GM12878 (cell line): ENCODE measurements at regions of chr5 and their contacts with region 1.

Region 1: GRCh38 chr5:142888469-142889085 is 118.4 kb downstream of the ARHGAP26 start:
- DNase-seq: no peak
- ATAC-seq: peak; percentile 70
- H3K4me3 ChIP-seq: no peak overlapping the region
- H3K27ac ChIP-seq: no peak overlapping the region
- H3K4me1 ChIP-seq: no peaks in the 10 kb centered on the region
- H3K27me3 ChIP-seq: no peaks in the 10 kb centered on the region
- CTCF ChIP-seq: peak; percentile 60 to 69 (median 69)
- EP300 ChIP-seq: no peak
- POLR2A ChIP-seq: no peak
- RAD21 ChIP-seq: peak; percentile 71

Region 2: DNA sequence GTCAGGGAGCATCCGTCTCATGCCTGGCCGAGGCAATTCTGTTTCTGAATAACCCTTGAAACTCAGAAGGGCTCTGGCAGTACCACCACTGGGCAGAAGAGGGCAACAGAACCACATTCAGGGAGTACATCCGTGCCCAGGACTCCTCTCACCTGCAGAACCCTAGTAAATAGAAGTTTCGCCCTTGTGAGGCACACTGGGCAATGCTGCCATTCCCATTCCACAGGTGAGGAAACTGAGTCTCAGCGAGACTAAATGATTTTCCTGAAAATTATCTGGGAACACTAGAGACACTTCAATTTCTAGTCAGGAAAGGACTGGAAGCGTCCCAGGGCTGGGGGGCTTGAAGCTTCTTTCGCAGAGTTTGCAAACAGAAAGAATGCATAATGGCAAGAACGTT is 277.4 kb before region 1 on chr5:
- CTCF ChIA-PET with region 1: interaction called, 4 read pairs
- POLR2A ChIA-PET with region 1: no interaction called
- RAD21 ChIA-PET with region 1: interaction called, 3 read pairs
- SMC1A ChIA-PET with region 1: no interaction called
- in situ Hi-C with region 1: no loop called
- intact Hi-C with region 1: loop called (anchors 5 kb)
- DNase-seq: no peak
- ATAC-seq: peak; percentile 97
- H3K4me3 ChIP-seq: no peak overlapping the region
- H3K27ac ChIP-seq: no peak overlapping the region
- H3K4me1 ChIP-seq: no peaks in the 10 kb centered on the region
- H3K27me3 ChIP-seq: no peaks in the 10 kb centered on the region; a peak in 4 of 4 replicates
- CTCF ChIP-seq: peak; percentile 68 to 94 (median 71)
- EP300 ChIP-seq: no peak
- POLR2A ChIP-seq: no peak
- RAD21 ChIP-seq: peak; percentile 78

Region 3: DNA sequence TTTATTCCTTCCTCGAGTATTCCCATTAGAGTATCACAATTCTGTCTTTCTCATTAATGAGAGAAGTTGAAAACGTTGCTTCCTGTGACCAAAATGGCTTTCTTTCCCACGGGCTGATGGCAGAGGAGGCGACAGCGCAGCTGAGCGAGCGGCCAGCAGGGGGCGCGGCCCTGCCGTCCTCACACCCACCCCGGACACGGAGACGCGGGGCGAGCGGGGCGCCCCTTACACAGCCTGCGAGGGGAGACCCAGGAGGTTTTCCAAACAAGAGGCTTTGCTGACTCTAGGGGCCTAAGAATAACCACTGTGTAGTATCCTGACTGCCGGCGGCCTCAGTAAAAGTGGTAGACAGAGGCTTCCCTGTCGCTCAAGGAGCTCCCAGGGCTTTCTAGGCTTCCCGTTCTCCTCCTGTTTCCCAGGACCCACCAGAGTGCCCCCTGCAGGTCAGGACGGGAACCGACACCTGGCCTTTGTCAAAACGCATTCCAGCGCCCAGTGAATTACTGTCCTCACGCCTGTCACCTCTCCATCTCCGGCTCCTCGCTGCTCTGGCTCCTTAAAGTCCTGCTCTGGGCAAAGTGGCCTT is 175.4 kb before region 1 on chr5:
- CTCF ChIA-PET with region 1: interaction called, 243 read pairs
- POLR2A ChIA-PET with region 1: no interaction called
- RAD21 ChIA-PET with region 1: interaction called, 21 read pairs
- SMC1A ChIA-PET with region 1: interaction called, 12 read pairs
- in situ Hi-C with region 1: no loop called
- intact Hi-C with region 1: loop called (anchors 1 kb)
- DNase-seq: peak; percentile 61
- ATAC-seq: peak; percentile 99
- H3K4me3 ChIP-seq: peak overlapping the region; percentile 53
- H3K27ac ChIP-seq: peak overlapping the region; percentile 50
- H3K4me1 ChIP-seq: no peaks in the 10 kb centered on the region
- H3K27me3 ChIP-seq: no peaks in the 10 kb centered on the region; a peak in 1 of 4 replicates
- CTCF ChIP-seq: peak; percentile 86 to 94 (median 91)
- EP300 ChIP-seq: no peak
- POLR2A ChIP-seq: no peak
- RAD21 ChIP-seq: peak; percentile 43

Region 4: GRCh38 chr5:142769741-142770631 is 118.6 kb before region 1 on chr5 and contains the start of gene ARHGAP26:
- CTCF ChIA-PET with region 1: interaction called, 16 read pairs
- POLR2A ChIA-PET with region 1: no interaction called
- RAD21 ChIA-PET with region 1: interaction called, 3 read pairs
- SMC1A ChIA-PET with region 1: no interaction called
- in situ Hi-C with region 1: no loop called
- intact Hi-C with region 1: no loop called
- DNase-seq: peak; percentile 70
- ATAC-seq: peak; percentile 99
- H3K4me3 ChIP-seq: peak within 1 kb of the TSS; percentile 85
- H3K27ac ChIP-seq: no peak within 1 kb of the TSS
- H3K4me1 ChIP-seq: peaks cover 5% of the 10 kb centered on the region; the same call in 1 of the 2 replicates
- H3K27me3 ChIP-seq: peaks cover 0 to 3% of the 10 kb centered on the region in 2 experiments; a peak in 3 of 4 replicates
- CTCF ChIP-seq: peak in 2 of 3 experiments; percentile 17 to 35; a peak in 2 of 6 replicates
- EP300 ChIP-seq: no peak
- POLR2A ChIP-seq: peak; percentile 91
- RAD21 ChIP-seq: no peak
- polyA plus RNA-seq, gene ARHGAP26: 9.4 to 9.8 TPM

Region 5: DNA sequence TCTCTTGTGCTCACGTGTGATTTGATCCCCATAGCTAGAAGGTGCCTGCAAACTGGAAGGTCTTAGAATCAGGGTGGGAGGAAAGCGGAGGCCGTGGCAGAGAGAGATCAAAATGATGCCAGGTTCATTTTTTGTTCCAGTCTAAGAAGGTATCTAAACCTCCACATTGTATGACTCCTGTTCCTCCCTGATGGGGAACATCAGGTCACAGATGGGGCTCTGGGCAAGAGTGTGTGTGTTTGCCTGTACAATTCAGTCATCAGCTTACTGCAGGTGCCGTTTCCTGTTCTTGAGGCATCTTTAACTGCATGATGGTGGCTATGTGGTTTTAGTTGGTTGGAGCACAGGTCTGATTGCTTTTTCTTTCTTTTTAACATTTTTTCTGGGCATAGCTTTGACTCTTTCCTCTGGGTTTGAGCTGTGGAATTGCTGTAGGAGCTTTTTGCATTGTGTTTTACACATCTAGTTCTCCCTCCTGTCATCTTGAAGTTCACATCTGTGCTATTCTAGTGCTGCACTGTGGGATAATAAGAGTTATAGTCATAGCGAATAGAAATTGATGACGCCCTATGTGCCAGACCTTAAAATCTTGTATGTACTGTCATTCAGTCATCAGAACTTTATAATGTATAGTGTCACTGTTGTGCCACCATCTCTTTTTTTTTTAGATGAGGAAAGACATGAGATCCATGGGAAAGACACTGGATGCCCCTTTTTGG is 87.6 kb before region 1 on chr5:
- CTCF ChIA-PET with region 1: no interaction called
- POLR2A ChIA-PET with region 1: no interaction called
- RAD21 ChIA-PET with region 1: no interaction called
- SMC1A ChIA-PET with region 1: no interaction called
- in situ Hi-C with region 1: no loop called
- intact Hi-C with region 1: no loop called
- DNase-seq: peak; percentile 48
- ATAC-seq: peak; percentile 90
- H3K4me3 ChIP-seq: 0 out of 2 replicates have a peak overlapping the region, but pooled peaks have one; percentile 24
- H3K27ac ChIP-seq: 0 out of 2 replicates have a peak overlapping the region, but pooled peaks have one; percentile 6
- H3K4me1 ChIP-seq: peaks cover 9% of the 10 kb centered on the region
- H3K27me3 ChIP-seq: no peaks in the 10 kb centered on the region
- CTCF ChIP-seq: no peak
- EP300 ChIP-seq: no peak
- POLR2A ChIP-seq: no peak
- RAD21 ChIP-seq: no peak

Region 6: DNA sequence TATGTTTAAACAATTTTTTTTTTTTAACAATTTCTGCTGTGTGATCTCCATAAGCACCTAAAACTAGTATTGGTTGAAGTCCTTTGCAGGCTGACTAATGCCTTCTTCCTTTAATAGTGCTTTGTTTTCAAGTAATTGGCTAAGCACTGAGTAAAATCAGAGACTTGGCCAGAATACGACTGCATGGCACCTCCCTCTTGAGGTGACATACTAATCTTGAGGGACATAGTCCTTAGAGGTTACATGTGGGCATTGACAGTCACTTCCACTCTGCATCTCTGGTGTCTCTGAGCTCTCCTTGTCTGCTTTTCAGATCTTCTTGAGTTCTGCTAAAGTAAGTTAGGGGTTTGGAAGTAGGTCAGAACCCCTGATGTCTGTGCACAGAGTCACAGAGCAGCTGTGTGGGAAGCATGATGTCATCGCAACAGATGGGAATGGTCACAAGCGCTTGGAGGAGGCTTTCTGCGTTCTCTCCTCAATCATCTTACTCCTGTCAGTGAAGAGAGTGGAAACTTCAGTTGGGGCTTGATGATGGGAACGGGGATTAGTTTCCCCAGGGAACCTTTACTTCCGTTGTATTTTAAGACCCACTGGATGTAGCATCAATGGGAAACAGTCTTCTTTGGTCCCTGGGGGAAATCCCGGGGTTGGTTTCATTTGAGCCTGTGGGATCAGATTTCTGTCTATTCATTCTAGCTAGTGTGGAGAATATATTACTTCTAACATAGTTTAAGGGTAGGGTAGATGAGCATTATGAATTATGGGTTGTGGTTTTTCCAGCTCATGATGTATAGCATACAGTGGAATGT is 18.5 kb after region 1 on chr5:
- CTCF ChIA-PET with region 1: interaction called, 11 read pairs
- POLR2A ChIA-PET with region 1: no interaction called
- RAD21 ChIA-PET with region 1: interaction called, 3 read pairs
- SMC1A ChIA-PET with region 1: interaction called, 3 read pairs
- in situ Hi-C with region 1: no loop called
- intact Hi-C with region 1: no loop called
- DNase-seq: no peak
- ATAC-seq: no peak
- H3K4me3 ChIP-seq: no peak overlapping the region
- H3K27ac ChIP-seq: no peak overlapping the region
- H3K4me1 ChIP-seq: no peaks in the 10 kb centered on the region
- H3K27me3 ChIP-seq: no peaks in the 10 kb centered on the region
- CTCF ChIP-seq: no peak
- EP300 ChIP-seq: no peak
- POLR2A ChIP-seq: no peak
- RAD21 ChIP-seq: no peak

Region 7: DNA sequence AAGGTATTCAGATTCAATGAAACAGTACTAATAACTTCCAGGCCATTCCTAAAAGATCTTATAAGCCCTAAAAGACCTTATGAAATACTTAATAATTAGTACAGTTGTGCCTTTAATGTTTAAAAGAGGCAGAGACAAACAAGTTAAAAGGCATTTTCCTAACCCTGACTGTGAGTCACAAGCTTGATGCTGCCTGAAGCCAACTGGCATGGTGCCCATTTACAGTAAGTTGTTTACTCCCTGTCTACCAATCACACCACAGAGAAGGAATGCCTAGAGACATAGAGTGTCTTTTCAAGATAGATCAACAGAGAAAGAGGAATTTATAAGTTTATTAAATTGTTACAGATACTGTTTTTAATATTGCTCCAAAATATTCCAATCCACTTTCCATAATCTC is 467.1 kb after region 1 on chr5:
- CTCF ChIA-PET with region 1: no interaction called
- POLR2A ChIA-PET with region 1: no interaction called
- RAD21 ChIA-PET with region 1: no interaction called
- SMC1A ChIA-PET with region 1: no interaction called
- in situ Hi-C with region 1: no loop called
- intact Hi-C with region 1: no loop called
- DNase-seq: no peak
- ATAC-seq: peak; percentile 25; the same call in 2 of the 3 replicates
- H3K4me3 ChIP-seq: no peak overlapping the region
- H3K27ac ChIP-seq: no peak overlapping the region
- H3K4me1 ChIP-seq: peaks cover 54% of the 10 kb centered on the region
- H3K27me3 ChIP-seq: no peaks in the 10 kb centered on the region
- CTCF ChIP-seq: no peak
- EP300 ChIP-seq: no peak
- POLR2A ChIP-seq: no peak
- RAD21 ChIP-seq: no peak